Activated CD4-positive, alpha-beta T cell treated with anti-CD3 and anti-CD28 coated beads, Interleukin-2, amount 10 ng/mL, durations not matched to agents 24 days and 14 days (primary cell): ENCODE measurements at regions of chr10 and their contacts with region 1.

Region 1: DNA sequence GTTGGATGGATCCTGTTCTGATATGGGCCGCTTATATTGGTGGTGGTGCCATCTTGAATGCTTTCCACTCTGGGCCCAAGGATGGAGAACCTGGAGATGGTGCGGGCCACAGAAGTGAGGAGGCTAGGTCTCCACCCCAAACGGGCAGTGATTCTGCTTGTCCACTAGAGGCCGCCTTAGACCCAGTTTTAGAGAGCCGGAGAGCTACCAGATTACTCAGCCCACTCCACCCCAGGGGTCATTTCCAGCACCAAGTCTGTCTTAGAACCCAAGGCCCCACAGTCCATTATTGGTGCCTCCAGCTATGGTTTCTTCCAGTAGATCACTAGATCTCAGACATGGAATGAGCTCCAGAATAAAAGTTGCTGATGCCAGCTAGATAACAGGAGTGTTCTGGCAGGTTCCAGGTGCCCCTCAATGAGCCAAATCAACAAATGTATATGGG is 11.8 kb upstream of the CAMK2G start:
- DNase-seq: peak; percentile 91
- H3K4me3 Mint-ChIP-seq: no peak overlapping the region
- H3K27ac Mint-ChIP-seq: no peak overlapping the region
- H3K4me1 Mint-ChIP-seq: peaks cover 15% of the 10 kb centered on the region
- H3K27me3 Mint-ChIP-seq: peaks cover 3% of the 10 kb centered on the region

Region 2: DNA sequence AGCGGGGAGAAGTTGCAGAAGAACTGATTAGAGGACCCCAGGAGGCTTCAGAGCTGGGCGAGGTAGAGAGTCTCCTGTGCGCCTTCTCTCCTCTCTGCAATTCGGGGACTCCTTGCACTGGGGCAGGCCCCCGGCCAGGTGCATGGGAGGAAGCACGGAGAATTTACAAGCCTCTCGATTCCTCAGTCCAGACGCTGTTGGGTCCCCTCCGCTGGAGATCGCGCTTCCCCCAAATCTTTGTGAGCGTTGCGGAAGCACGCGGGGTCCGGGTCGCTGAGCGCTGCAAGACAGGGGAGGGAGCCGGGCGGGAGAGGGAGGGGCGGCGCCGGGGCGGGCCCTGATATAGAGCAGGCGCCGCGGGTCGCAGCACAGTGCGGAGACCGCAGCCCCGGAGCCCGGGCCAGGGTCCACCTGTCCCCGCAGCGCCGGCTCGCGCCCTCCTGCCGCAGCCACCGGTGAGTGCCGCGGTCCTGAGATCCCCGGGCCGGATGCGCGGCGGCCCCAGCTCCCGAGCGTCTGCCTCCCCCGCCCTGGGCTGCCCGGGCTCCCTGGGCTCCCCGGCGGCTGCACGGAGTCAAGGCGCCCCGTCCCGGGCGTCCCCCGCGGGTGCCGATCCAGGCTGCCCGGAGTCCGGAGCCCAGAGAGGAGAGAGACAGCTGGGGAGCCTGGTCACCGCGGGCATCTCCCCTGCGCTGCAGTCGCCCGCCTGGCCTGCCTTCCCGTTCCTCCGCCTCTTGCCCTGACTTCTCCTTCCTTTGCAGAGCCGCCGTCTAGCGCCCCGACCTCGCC is 24.9 kb after region 1 on chr10 and contains the start of gene PLAU:
- intact Hi-C with region 1: loop called (anchors 2 kb)
- DNase-seq: peak; percentile 84
- H3K4me3 Mint-ChIP-seq: peak within 1 kb of the TSS; percentile 90
- H3K27ac Mint-ChIP-seq: peak within 1 kb of the TSS; percentile 81
- H3K4me1 Mint-ChIP-seq: peaks cover 42% of the 10 kb centered on the region
- H3K27me3 Mint-ChIP-seq: peaks cover 40% of the 10 kb centered on the region
- total RNA-seq, gene PLAU: 0.57 and 0.72 TPM in 2 replicates

Region 3: GRCh38 chr10:73940634-73941221 is 54.6 kb after region 1 on chr10:
- intact Hi-C with region 1: loop called (anchors 1 kb)
- DNase-seq: peak; percentile 97
- H3K4me3 Mint-ChIP-seq: peak overlapping the region; percentile 51
- H3K27ac Mint-ChIP-seq: peak overlapping the region; percentile 41
- H3K4me1 Mint-ChIP-seq: peaks cover 18% of the 10 kb centered on the region
- H3K27me3 Mint-ChIP-seq: peaks cover 9% of the 10 kb centered on the region

Region 4: DNA sequence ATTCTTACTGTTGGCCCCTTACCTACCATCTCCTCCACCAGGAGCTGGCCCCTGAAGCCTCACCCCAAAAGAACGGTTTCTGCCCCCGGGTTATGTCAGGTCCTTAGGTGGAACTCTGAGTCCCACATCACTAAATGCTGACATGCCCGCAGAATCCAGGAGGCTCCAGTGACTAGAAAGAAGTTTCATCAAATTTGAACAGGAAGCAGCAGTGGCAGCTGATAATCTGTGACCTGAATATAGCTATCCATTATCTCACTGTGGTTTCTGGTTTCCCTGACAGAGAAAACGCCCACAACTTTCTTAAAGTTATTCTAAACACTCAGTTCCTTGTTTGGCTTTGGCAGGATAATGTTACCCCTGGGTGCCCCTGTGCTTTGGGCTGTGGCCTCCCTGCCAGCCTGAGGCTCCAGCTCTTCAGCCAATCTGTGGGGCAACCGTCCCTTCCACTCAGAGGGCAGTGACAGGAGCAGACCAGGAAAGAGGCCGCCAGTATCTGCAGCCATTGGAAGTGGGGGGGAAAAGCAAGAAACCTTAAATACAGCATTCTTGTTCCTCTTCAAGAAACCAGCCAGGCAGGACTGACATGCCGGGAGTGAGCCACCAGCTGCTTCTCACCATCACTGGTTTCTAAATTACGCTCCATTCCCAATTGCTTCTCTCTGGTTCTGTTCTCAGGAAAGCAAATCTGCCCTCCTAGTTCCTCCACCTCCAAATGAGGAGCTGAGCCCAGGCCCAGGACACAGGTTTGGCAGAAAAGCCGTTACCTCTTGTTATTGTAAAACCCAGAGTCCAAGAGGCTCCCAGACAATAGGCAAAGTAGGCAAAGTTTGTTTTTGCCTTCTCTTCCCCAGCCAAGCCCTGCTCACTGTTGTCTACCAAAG is 70.6 kb after region 1 on chr10:
- intact Hi-C with region 1: loop called (anchors 5 kb)
- DNase-seq: peak; percentile 80
- H3K4me3 Mint-ChIP-seq: peak overlapping the region; percentile 78
- H3K27ac Mint-ChIP-seq: peak overlapping the region; percentile 86
- H3K4me1 Mint-ChIP-seq: peaks cover 47% of the 10 kb centered on the region
- H3K27me3 Mint-ChIP-seq: peaks cover 2% of the 10 kb centered on the region

Region 5: DNA sequence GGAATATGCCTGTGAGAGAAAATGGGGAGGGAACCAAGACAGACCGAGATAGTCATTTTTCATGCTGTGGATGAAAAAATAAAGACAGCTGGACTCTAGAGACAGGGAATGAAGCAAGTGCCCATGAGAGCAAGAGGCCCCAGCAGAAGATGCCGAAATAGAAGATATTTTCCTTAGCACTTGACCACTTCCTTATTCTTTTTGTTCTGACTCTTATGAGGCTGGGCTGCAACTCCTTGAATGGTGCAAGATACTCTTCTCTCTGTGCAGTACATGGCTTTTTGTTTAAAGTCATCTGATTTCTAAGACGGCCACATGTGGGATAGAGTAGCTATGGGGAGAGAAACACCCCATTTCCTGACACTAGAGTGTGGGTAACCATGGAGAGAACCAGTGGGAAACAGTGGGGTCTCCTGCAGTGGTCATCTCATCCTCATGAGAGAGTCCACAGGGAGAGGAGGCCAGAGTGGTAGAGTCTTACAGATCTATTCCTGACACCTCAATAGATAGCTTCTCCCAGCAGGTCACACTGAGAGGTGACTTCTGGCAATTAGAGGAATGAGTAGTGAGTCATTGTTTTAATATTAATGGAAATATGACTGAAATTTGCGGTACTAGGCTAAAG is 93.8 kb after region 1 on chr10:
- intact Hi-C with region 1: no loop called
- DNase-seq: no peak
- H3K4me3 Mint-ChIP-seq: no peak overlapping the region
- H3K27ac Mint-ChIP-seq: no peak overlapping the region
- H3K4me1 Mint-ChIP-seq: peaks cover 9% of the 10 kb centered on the region
- H3K27me3 Mint-ChIP-seq: peaks cover 32% of the 10 kb centered on the region

Region 6: DNA sequence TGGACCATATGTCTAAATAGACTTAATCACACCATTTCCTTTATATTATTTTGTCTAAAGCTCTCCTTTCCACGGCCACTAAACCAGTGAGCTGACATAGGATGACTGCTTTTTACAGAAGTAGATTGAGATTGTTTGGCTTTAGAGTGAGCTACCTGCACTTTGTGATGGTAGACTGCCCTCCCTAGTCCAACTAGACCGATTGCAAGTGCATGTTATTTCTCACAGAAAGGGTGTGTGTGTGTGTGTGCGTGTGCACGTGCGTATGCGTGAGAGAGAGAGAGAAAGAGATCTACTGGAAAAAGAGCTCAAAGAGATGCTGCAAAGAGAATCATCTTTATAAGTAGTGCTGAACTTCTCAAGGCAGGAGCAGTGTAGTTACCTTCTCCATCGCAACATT is 172.6 kb after region 1 on chr10:
- intact Hi-C with region 1: loop called (anchors 5 kb)
- DNase-seq: peak; percentile 75
- H3K4me3 Mint-ChIP-seq: no peak overlapping the region
- H3K27ac Mint-ChIP-seq: no peak overlapping the region
- H3K4me1 Mint-ChIP-seq: peaks cover 32% of the 10 kb centered on the region
- H3K27me3 Mint-ChIP-seq: no peaks in the 10 kb centered on the region

Region 7: GRCh38 chr10:74081192-74081803 is 195.2 kb after region 1 on chr10:
- intact Hi-C with region 1: loop called (anchors 1 kb)
- DNase-seq: peak; percentile 81
- H3K4me3 Mint-ChIP-seq: no peak overlapping the region
- H3K27ac Mint-ChIP-seq: no peak overlapping the region
- H3K4me1 Mint-ChIP-seq: peaks cover 39% of the 10 kb centered on the region
- H3K27me3 Mint-ChIP-seq: no peaks in the 10 kb centered on the region

Region 8: DNA sequence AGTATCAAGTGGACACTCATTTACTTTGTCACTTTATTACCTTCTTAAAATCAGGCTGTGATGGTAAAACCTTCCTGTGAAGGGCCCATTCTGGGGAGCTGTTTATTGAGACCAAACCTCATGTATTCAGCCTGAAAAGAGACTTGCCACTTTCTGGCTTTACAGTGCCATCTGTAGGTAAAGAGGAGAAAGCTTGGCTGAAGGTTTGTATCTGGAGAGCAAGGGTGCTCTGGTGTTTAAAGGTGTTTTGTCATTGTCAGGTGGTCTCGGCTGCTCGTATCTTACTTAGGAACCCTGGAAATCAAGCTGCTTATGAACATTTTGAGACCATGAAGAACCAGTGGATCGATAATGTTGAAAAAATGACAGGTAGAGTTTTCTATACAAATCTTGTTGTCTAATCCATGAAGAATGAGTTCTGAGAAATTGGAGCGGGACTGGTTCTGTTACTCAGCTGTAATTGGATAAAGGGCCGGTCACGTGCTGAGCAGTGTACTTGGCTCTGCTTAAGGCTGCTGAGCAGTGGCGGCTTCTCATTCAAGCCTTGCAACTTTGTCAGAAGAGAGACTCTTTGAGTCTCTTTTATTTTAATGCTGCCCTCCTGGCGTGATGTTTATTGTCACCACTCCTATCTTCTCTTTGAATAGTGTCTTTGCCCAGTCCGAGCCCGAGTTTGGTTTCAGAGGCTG is 217.6 kb after region 1 on chr10:
- intact Hi-C with region 1: loop called (anchors 5 kb)
- DNase-seq: no peak
- H3K4me3 Mint-ChIP-seq: no peak overlapping the region
- H3K27ac Mint-ChIP-seq: no peak overlapping the region
- H3K4me1 Mint-ChIP-seq: peaks cover 4% of the 10 kb centered on the region
- H3K27me3 Mint-ChIP-seq: no peaks in the 10 kb centered on the region